ENCODE measurements at regions of chr5 and their contacts with region 1.

Region 1: DNA sequence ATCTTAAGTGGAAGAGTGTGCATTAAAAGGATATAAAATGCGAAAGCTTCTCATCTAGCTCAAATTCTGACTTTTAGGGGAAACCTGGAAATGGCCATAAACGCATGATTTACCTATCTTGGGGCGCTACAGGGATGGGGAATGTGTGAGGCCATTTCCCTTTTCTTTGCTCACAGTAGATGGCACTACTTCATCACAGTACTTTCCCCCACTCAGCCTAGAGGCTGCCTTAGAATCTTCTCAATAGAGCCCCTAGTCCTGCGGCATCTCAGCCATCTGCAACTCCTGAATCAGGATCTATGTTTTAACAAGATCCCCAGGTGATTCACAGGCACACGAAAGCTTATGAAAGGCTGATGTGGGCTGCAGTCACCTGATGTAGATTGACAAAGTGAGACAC is 110.8 kb downstream of the LHFPL2 start:
- DNase-seq: peak; percentile 68
- ATAC-seq: peak; percentile 81
- H3K4me3 ChIP-seq: no peak overlapping the region
- H3K27ac ChIP-seq: no peak overlapping the region
- H3K4me1 ChIP-seq: peaks cover 11% of the 10 kb centered on the region
- H3K27me3 ChIP-seq: no peaks in the 10 kb centered on the region
- CTCF ChIP-seq: peak; percentile 71
- POLR2A ChIP-seq: peak; percentile 47; the same call in 1 of the 2 replicates
- RAD21 ChIP-seq: peak; percentile 87

Region 2: DNA sequence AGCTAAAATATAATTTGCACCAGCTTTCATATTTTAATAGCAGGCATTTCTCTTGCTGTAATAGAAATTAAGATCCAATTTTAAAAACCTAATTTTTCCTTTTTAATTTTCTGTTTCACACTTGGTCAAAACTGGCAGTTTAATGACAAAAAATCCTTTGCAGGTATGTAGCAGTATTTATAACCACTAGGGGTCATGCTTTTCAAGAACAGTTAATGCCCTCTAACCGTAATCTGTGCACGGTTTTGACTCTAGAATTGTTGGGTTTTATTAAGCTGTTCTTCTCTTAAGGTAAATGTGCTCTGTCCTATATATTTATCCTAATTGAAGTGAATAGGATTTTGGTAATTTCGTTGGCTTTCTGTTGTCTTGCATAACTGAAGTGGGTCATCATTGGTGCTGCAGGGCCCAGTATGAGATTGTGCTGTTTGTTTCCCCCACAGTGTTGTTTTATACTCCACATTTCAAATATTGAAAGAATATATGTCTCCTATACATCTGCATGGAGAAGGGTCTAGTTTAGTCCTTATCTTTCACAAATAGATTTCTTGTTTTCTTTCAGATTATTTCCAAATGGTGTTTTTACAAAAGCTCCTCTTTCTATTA is 70.0 kb before region 1 on chr5:
- CTCF ChIA-PET with region 1: interaction called, 8 read pairs
- POLR2A ChIA-PET with region 1: no interaction called
- dilution Hi-C with region 1: no loop called
- in situ Hi-C with region 1: loop called (anchors 5 kb)
- intact Hi-C with region 1: no loop called
- DNase-seq: peak; percentile 74
- ATAC-seq: peak; percentile 86
- H3K4me3 ChIP-seq: no peak overlapping the region
- H3K27ac ChIP-seq: no peak overlapping the region
- H3K4me1 ChIP-seq: no peaks in the 10 kb centered on the region
- H3K27me3 ChIP-seq: no peaks in the 10 kb centered on the region
- CTCF ChIP-seq: peak; percentile 75
- POLR2A ChIP-seq: no peak
- RAD21 ChIP-seq: peak; percentile 79

Region 3: DNA sequence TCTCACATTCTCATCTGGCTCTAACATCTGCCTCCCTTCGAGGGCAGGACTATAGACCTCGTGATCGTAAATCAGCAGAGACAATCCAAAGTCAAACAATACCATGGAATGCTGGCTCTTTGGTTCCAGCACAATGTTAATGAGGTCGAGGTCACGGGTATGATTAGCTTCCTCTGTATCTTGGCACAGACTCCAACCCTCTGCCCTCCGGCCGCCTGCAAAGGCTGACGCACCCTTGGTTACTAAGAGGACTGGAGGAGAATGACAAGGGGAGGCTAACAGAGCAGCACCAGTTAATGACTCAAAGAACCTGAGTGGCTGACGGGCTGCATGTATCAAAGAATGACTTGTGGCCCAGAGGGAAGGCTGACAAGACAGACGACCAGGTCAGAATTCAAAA is 100.6 kb after region 1 on chr5:
- CTCF ChIA-PET with region 1: no interaction called
- POLR2A ChIA-PET with region 1: no interaction called
- dilution Hi-C with region 1: no loop called
- in situ Hi-C with region 1: loop called (anchors 5 kb)
- intact Hi-C with region 1: no loop called
- DNase-seq: peak; percentile 92
- ATAC-seq: peak; percentile 76
- H3K4me3 ChIP-seq: no peak overlapping the region
- H3K27ac ChIP-seq: peak overlapping the region; percentile 2; the same call in 1 of the 2 replicates
- H3K4me1 ChIP-seq: peaks cover 36% of the 10 kb centered on the region
- H3K27me3 ChIP-seq: no peaks in the 10 kb centered on the region
- CTCF ChIP-seq: no peak
- POLR2A ChIP-seq: 0 out of 2 replicates have a peak, but pooled peaks have one; percentile 20
- RAD21 ChIP-seq: no peak; the same call in 1 of the 2 replicates

Region 4: DNA sequence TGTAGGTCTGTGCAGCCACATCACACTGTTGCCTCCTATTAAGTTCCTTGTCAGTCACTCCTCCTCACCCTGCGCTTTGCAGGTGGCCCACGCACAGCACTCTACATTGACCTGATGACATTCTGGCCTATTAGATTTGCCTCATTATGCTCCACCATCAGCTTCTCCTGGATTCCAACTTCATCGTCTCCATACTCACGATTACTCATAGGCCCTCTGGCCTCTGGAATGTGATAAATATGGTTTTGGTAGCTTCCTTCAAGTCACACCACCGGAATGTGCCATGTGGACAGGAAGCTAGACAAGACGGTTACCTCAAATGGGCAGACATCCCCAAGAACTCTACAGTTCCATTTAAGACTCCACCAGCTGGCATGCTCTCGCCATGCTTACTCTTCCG is 268.7 kb after region 1 on chr5:
- CTCF ChIA-PET with region 1: no interaction called
- POLR2A ChIA-PET with region 1: no interaction called
- dilution Hi-C with region 1: no loop called
- in situ Hi-C with region 1: no loop called
- intact Hi-C with region 1: loop called (anchors 5 kb)
- DNase-seq: peak; percentile 94
- ATAC-seq: peak; percentile 80
- H3K4me3 ChIP-seq: no peak overlapping the region
- H3K27ac ChIP-seq: peak overlapping the region; percentile 67
- H3K4me1 ChIP-seq: peaks cover 24% of the 10 kb centered on the region
- H3K27me3 ChIP-seq: no peaks in the 10 kb centered on the region
- CTCF ChIP-seq: no peak
- POLR2A ChIP-seq: 0 out of 2 replicates have a peak, but pooled peaks have one; percentile 25
- RAD21 ChIP-seq: peak; percentile 21; the same call in 1 of the 2 replicates

Region 5: GRCh38 chr5:78899922-78900362 is 362.1 kb after region 1 on chr5:
- CTCF ChIA-PET with region 1: no interaction called
- POLR2A ChIA-PET with region 1: no interaction called
- dilution Hi-C with region 1: no loop called
- in situ Hi-C with region 1: loop called (anchors 10 kb)
- intact Hi-C with region 1: loop called (anchors 10 kb)
- DNase-seq: peak; percentile 67
- ATAC-seq: peak; percentile 19; the same call in 1 of the 2 replicates
- H3K4me3 ChIP-seq: no peak overlapping the region
- H3K27ac ChIP-seq: no peak overlapping the region
- H3K4me1 ChIP-seq: peaks cover 9% of the 10 kb centered on the region
- H3K27me3 ChIP-seq: no peaks in the 10 kb centered on the region
- CTCF ChIP-seq: peak; percentile 85
- POLR2A ChIP-seq: peak; percentile 39; the same call in 1 of the 2 replicates
- RAD21 ChIP-seq: peak; percentile 93